T-cell (primary cell): ENCODE measurements at regions of chr1 and their contacts with region 1.

Region 1: GRCh38 chr1:226634166-226634588 is 85.6 kb downstream of the STUM start:
- DNase-seq: peak; percentile 53 to 91 (median 76)
- ATAC-seq: peak; percentile 67 to 78 (median 70)
- H3K4me3 ChIP-seq: no peak overlapping the region
- H3K4me3 Mint-ChIP-seq: peak overlapping the region in 1 of 3 donors; percentile 92
- H3K27ac ChIP-seq: peak overlapping the region; percentile 56
- H3K27ac Mint-ChIP-seq: peak overlapping the region; percentile 76 to 88
- H3K4me1 ChIP-seq: peaks cover 31 to 60% of the 10 kb centered on the region in 2 experiments
- H3K4me1 Mint-ChIP-seq: peaks cover 60 to 69% (median 69%) of the 10 kb centered on the region in 3 donors
- H3K27me3 ChIP-seq: no peaks in the 10 kb centered on the region
- H3K27me3 Mint-ChIP-seq: no peaks in the 10 kb centered on the region

Region 2: DNA sequence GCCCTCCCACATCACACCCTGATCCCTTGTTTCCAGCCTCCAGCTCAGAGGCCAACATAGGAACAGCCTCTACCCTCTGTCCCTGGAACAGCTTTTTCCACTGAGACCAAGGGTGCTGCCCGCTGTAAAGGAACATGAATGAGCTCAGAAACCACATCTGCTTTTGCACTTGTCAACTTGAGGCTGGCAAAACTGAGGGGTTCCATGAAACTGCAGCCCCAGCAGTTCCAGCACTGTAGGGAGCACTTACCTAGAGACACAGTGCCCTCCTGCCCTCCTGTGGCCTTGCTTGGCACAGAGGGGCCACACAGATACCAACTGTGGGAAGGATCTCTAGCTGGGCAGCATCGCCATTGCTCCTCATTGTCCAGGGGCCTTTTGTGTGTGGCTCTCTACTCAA is 53.2 kb after region 1 on chr1:
- CTCF ChIA-PET with region 1: interaction called, 22 to 26 read pairs
- POLR2A ChIA-PET with region 1: interaction called, 6 to 9 read pairs
- DNase-seq: peak in 31 of 35 experiments; percentile 41 to 74 (median 60)
- ATAC-seq: peak; percentile 17 to 42 (median 36)
- H3K4me3 ChIP-seq: no peak overlapping the region
- H3K4me3 Mint-ChIP-seq: peak overlapping the region in 2 of 3 donors; percentile 8 to 67
- H3K27ac ChIP-seq: peak overlapping the region; percentile 92
- H3K27ac Mint-ChIP-seq: peak overlapping the region; percentile 79 to 93
- H3K4me1 ChIP-seq: peaks cover 93 to 94% of the 10 kb centered on the region in 2 experiments
- H3K4me1 Mint-ChIP-seq: peaks cover 99 to 100% (median 100%) of the 10 kb centered on the region in 3 donors
- H3K27me3 ChIP-seq: no peaks in the 10 kb centered on the region
- H3K27me3 Mint-ChIP-seq: no peaks in the 10 kb centered on the region

Region 3: DNA sequence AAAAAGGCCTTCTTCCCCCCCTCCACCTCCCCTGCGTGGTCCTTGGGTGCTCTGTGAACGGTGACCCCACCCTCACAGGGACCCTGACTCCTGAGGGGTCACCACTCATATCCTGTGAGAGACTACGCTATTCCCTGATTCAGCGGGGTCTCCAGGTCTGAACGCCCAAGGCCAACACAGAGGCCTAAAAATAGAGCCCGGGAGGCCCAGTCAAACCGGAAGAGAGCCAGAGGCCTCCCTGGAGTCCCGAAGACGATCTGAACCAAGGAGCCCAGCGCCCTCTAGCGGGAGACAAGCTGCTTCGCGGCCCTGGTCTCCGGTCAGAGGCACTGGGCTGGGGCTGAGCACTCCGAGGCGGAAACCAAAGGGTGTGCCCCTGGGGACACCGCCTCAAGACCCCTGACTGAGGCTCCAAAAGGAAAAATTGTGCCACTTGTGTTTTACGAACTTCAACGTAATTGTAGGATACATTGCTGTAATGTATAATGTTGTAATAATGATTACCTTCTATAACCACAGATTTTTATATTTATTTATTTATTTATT is 193.9 kb after region 1 on chr1:
- CTCF ChIA-PET with region 1: interaction called, 6 to 11 read pairs
- POLR2A ChIA-PET with region 1: no interaction called
- DNase-seq: peak; percentile 80 to 97 (median 91)
- ATAC-seq: peak; percentile 94 to 99 (median 98)
- H3K4me3 ChIP-seq: peak overlapping the region; percentile 28 to 53
- H3K4me3 Mint-ChIP-seq: peak overlapping the region; percentile 51 to 65 (median 56)
- H3K27ac ChIP-seq: peak overlapping the region; percentile 64
- H3K27ac Mint-ChIP-seq: peak overlapping the region; percentile 75 to 80
- H3K4me1 ChIP-seq: peaks cover 16 to 17% of the 10 kb centered on the region in 2 experiments
- H3K4me1 Mint-ChIP-seq: peaks cover 22 to 44% (median 23%) of the 10 kb centered on the region in 3 donors
- H3K27me3 ChIP-seq: peaks cover 0 to 3% of the 10 kb centered on the region in 2 experiments
- H3K27me3 Mint-ChIP-seq: no peaks in the 10 kb centered on the region